Posterior cingulate gyrus (tissue), 11 donors: ENCODE measurements at regions of chr19 and their contacts with region 1.

Region 1: GRCh38 chr19:55385740-55386529 is at the start of gene RPL28:
- DNase-seq: peak; percentile 98 to 100 (median 99)

Region 2: DNA sequence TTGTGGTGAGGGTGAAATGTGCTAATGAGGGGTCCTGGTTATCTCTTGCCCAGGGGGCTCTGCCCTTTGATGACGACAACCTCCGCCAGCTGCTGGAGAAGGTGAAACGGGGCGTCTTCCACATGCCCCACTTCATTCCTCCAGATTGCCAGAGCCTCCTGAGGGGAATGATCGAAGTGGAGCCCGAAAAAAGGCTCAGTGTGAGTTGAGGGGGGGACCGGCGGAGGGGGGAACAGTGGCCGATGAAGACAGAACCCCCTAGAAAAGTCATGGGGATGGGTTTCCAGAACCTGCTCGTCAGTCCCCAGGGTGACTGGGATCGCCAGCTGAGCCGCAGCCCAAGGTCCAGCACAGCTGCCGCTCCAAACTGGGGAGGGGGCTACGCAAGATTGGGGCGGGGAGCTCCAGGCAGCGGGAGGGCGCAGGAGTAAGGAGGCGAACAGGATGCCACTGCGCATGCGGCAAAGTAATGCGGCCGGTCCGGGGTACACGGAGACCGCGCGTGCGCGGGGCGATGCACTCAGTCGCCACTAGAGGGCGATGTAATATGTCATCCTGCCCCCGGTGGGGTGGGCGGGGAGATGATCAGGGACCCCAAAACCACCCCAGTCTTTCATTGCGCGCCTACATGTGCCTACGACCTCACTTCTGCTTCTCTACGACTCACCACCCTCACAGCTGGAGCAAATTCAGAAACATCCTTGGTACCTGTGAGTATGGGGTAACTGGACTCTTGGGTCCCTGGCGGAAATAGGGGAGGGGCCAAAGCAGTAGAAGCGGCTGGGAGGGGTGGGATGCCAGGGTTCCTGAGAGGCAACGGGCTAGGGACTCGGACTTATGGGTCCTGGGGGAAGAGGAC is 84.2 kb before region 1 on chr19:
- intact Hi-C with region 1: loop called (anchors 5 kb)
- DNase-seq: peak; percentile 74 to 98 (median 88)

Region 3: DNA sequence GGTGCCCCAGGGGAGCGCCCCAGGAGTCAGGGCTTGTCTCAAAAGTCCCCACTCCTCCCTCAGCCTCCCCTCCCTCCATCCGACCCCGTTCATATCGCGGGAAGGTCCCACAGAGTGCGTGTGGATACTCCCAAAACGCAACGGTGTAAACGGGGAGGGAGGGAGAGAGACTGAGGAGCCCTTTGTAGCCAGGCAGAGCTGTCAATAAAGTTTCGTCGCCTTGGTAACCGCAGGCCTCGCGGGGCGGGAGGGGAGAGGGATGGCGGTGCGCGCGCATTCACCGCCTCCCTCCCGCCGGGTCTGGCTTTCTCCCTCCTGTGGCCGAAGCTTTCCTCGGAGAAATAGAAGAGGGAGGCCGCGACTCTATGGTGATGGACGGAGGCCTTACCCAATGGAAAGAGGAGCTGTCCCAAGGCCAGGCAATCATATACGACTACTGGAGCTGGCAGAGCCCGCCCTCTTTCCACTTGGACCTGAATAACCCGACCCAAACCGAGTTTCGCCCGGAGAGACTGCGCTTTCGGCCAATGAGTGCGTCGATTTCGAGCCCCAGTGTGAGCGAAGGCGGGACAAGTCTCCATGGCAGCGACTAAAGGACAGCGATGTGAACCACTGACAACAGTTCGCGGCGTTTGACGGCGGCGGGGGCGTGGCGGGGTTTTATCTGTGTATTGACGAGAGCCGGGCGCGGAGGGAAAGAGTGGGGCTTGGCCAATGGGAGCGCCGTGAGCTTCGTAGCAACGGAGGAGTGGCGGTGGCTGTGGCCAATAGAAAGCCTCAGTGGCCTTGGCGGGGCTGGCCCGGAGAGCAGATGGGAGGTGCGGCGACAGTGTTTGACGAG is 46.7 kb before region 1 on chr19 and contains the start of gene KMT5C:
- intact Hi-C with region 1: loop called (anchors 5 kb)
- DNase-seq: peak; percentile 100

Region 4: GRCh38 chr19:55407800-55408532 is 22.0 kb after region 1 on chr19:
- intact Hi-C with region 1: loop called (anchors 1 kb)
- DNase-seq: peak; percentile 97 to 100 (median 99)

Region 5: DNA sequence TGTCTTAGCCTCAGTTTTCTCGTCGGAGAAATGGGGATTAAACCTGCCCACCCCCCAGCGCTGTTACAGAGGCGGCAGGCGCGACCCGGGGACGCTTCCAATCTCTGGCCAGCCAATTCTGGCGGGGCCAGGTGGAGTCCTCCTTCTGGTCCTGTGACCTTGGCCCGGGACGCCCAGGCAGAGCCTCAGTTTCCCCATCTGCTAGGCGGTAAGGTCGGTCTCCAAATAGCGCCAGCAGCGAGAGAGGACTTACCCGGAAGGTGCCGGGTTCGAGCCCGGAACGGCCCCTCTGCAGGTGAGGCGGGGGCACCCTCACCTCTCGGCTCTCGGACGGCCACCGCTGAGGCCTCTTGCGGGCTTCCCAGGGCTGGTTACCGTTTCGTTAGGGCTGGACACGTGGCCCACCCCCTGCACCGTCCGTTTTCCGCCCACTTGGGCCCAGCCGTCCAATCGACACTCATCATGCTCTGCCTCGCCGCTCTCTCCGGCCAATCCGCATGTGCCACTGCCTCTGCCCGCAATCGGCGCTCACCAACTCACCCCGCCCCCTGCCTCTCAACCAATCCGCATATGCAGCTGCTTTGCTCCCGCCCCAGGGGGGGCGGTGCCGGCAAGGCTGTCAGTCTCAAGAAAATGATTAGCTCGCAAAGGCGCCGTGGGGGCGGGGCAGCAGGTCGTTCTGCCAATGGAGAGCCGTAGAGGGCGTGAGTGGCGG is 75.5 kb after region 1 on chr19 and contains the start of gene ISOC2:
- intact Hi-C with region 1: loop called (anchors 5 kb)
- DNase-seq: peak; percentile 100